ENCODE measurements at regions of chr3 and their contacts with region 1.

Region 1: GRCh38 chr3:120558771-120559241 is 37.3 kb upstream of the NDUFB4 start:
- DNase-seq: peak; percentile 85 to 91 (median 89)
- H3K4me3 ChIP-seq: peak overlapping the region in 1 of 2 donors; percentile 33
- H3K4me3 Mint-ChIP-seq: peak overlapping the region; percentile 74 to 88 (median 82)
- H3K27ac ChIP-seq: peak overlapping the region; percentile 36
- H3K27ac Mint-ChIP-seq: peak overlapping the region; percentile 69 to 96 (median 93)
- H3K4me1 ChIP-seq: peaks cover 11% of the 10 kb centered on the region
- H3K4me1 Mint-ChIP-seq: peaks cover 11 to 24% (median 13%) of the 10 kb centered on the region in 4 donors
- H3K27me3 ChIP-seq: no peaks in the 10 kb centered on the region
- H3K27me3 Mint-ChIP-seq: peaks cover 1% of the 10 kb centered on the region in 2 donors

Region 2: GRCh38 chr3:118927449-118927848 is 1631.4 kb before region 1 on chr3:
- CTCF ChIA-PET with region 1: no interaction called
- POLR2A ChIA-PET with region 1: no interaction called
- intact Hi-C with region 1: no loop called
- DNase-seq: no peak
- H3K4me3 ChIP-seq: no peak overlapping the region
- H3K4me3 Mint-ChIP-seq: no peak overlapping the region
- H3K27ac ChIP-seq: no peak overlapping the region
- H3K27ac Mint-ChIP-seq: no peak overlapping the region
- H3K4me1 ChIP-seq: no peaks in the 10 kb centered on the region
- H3K4me1 Mint-ChIP-seq: peaks cover 0 to 4% (median 0%) of the 10 kb centered on the region in 4 donors
- H3K27me3 ChIP-seq: no peaks in the 10 kb centered on the region
- H3K27me3 Mint-ChIP-seq: peaks cover 2 to 4% of the 10 kb centered on the region in 2 donors

Region 3: GRCh38 chr3:120245386-120245785 is 313.4 kb before region 1 on chr3:
- CTCF ChIA-PET with region 1: interaction called, 116 read pairs
- POLR2A ChIA-PET with region 1: interaction called, 4 read pairs
- intact Hi-C with region 1: loop called (anchors 1 kb)
- DNase-seq: no peak
- H3K4me3 ChIP-seq: no peak overlapping the region
- H3K4me3 Mint-ChIP-seq: no peak overlapping the region
- H3K27ac ChIP-seq: no peak overlapping the region
- H3K27ac Mint-ChIP-seq: no peak overlapping the region
- H3K4me1 ChIP-seq: no peaks in the 10 kb centered on the region
- H3K4me1 Mint-ChIP-seq: no peaks in the 10 kb centered on the region
- H3K27me3 ChIP-seq: peaks cover 4% of the 10 kb centered on the region
- H3K27me3 Mint-ChIP-seq: peaks cover 11 to 17% of the 10 kb centered on the region in 2 donors

Region 4: DNA sequence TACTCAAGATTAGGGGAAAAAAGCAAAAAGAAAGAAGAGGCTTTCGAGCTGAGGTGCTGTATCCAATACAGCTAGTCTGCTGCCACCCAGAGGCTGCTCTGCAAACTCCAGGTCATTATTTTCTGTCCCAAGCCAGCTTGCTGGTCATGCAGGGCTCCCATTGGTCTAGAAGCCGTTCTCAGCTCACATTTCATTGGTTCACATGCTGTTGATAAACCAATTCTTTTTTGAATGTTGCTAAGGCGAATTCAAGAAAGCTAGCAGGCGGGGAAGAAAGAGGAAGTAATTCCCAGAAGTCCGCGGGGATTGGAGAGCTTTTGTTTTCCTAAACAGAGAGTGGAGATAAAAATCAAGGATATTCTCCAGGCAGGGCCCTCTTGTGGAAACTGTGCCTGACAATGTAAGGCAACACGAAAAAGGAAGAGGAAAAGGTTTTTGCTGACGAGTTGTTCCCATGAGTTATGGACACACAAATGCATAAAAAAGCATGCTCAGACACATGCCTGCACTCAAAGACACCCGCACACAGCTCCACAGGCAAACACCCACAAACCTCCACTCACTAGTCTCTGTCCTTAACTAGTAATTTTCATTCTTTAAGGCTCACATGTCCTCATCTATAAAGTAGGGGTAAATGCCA is 141.4 kb before region 1 on chr3:
- CTCF ChIA-PET with region 1: interaction called, 86 read pairs
- POLR2A ChIA-PET with region 1: interaction called, 4 read pairs
- intact Hi-C with region 1: loop called (anchors 1 kb)
- DNase-seq: peak; percentile 78 to 83 (median 80)
- H3K4me3 ChIP-seq: peak overlapping the region; percentile 43 to 59
- H3K4me3 Mint-ChIP-seq: peak overlapping the region; percentile 82 to 94 (median 87)
- H3K27ac ChIP-seq: no peak overlapping the region
- H3K27ac Mint-ChIP-seq: peak overlapping the region in 5 of 7 donors; percentile 23 to 86 (median 81)
- H3K4me1 ChIP-seq: peaks cover 10% of the 10 kb centered on the region
- H3K4me1 Mint-ChIP-seq: peaks cover 11 to 25% (median 12%) of the 10 kb centered on the region in 4 donors
- H3K27me3 ChIP-seq: no peaks in the 10 kb centered on the region
- H3K27me3 Mint-ChIP-seq: peaks cover 0 to 7% of the 10 kb centered on the region in 2 donors

Region 5: DNA sequence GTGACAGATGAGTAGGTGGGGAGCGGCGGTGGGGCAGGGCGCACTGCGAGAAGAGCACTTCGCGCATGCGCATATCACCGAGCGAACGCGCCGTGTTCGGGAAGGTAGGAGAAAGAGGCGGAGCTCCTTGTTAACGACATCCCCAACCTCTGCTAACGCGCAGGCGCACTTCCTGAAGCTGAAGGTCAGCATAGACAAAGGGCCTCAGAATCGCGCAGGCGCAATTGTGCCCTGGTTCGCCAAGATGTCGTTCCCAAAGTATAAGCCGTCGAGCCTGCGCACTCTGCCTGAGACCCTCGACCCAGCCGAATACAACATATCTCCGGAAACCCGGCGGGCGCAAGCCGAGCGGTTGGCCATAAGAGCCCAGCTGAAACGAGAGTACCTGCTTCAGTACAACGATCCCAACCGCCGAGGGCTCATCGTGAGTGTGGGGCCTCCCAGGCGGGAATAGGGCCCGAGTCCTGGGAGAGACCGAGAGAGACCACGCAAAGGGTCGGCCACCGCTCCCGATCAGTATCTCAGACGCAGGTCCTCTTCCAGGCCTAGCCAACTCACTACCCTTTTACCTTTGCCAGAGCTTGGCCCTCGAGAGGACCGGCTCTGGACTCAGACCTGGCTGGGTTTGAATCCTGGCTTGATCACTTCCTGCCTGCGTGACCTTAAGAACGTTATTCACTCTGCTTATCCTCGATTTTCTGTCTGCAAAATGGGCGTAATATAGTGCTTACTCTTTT is 37.5 kb after region 1 on chr3 and contains the start of gene NDUFB4:
- CTCF ChIA-PET with region 1: interaction called, 26 read pairs
- POLR2A ChIA-PET with region 1: interaction called, 8 read pairs
- intact Hi-C with region 1: loop called (anchors 1 kb)
- DNase-seq: peak; percentile 89 to 96 (median 96)
- H3K4me3 ChIP-seq: peak within 1 kb of the TSS; percentile 97 to 99
- H3K4me3 Mint-ChIP-seq: peak within 1 kb of the TSS; percentile 91 to 98 (median 95)
- H3K27ac ChIP-seq: peak within 1 kb of the TSS; percentile 98
- H3K27ac Mint-ChIP-seq: peak within 1 kb of the TSS in 6 of 7 donors; percentile 96 to 99 (median 98)
- H3K4me1 ChIP-seq: peaks cover 30% of the 10 kb centered on the region
- H3K4me1 Mint-ChIP-seq: peaks cover 6 to 8% (median 7%) of the 10 kb centered on the region in 4 donors
- H3K27me3 ChIP-seq: no peaks in the 10 kb centered on the region
- H3K27me3 Mint-ChIP-seq: no peaks in the 10 kb centered on the region
- total RNA-seq, gene NDUFB4: 82.1 to 82.8 TPM

Region 6: GRCh38 chr3:120693439-120694186 is 134.8 kb after region 1 on chr3:
- CTCF ChIA-PET with region 1: no interaction called
- POLR2A ChIA-PET with region 1: no interaction called
- intact Hi-C with region 1: no loop called
- DNase-seq: no peak
- H3K4me3 ChIP-seq: no peak overlapping the region
- H3K4me3 Mint-ChIP-seq: no peak overlapping the region
- H3K27ac ChIP-seq: no peak overlapping the region
- H3K27ac Mint-ChIP-seq: peak overlapping the region in 1 of 7 donors; percentile 70
- H3K4me1 ChIP-seq: no peaks in the 10 kb centered on the region
- H3K4me1 Mint-ChIP-seq: peaks cover 0 to 2% (median 0%) of the 10 kb centered on the region in 4 donors
- H3K27me3 ChIP-seq: no peaks in the 10 kb centered on the region
- H3K27me3 Mint-ChIP-seq: no peaks in the 10 kb centered on the region

Region 7: GRCh38 chr3:120708408-120708807 is 149.6 kb after region 1 on chr3:
- CTCF ChIA-PET with region 1: interaction called, 3 read pairs
- POLR2A ChIA-PET with region 1: no interaction called
- intact Hi-C with region 1: loop called (anchors 10 kb)
- DNase-seq: no peak
- H3K4me3 ChIP-seq: no peak overlapping the region
- H3K4me3 Mint-ChIP-seq: no peak overlapping the region
- H3K27ac ChIP-seq: no peak overlapping the region
- H3K27ac Mint-ChIP-seq: peak overlapping the region in 2 of 7 donors; percentile 8 to 13
- H3K4me1 ChIP-seq: no peaks in the 10 kb centered on the region
- H3K4me1 Mint-ChIP-seq: peaks cover 2 to 10% (median 4%) of the 10 kb centered on the region in 4 donors
- H3K27me3 ChIP-seq: no peaks in the 10 kb centered on the region
- H3K27me3 Mint-ChIP-seq: no peaks in the 10 kb centered on the region

Region 8: DNA sequence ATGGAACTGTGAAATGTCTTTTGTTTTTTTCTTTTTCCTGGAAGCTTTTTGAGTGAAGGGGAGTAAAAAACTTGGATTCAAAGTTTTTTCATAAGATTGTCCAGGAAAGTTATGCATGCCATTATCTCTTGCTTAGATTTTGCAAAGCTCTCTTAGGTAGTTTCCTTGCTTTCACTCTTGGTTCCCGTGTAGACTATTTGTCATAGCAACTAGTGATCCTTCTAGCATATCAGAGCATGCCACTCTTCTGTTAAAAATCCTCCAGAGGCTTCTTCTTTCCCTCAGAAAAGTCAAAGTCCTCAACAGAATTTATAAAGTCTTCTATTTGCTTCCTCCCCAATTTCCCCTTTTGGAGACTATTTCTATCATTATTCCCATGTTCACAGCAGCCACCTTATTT is 204.8 kb after region 1 on chr3:
- CTCF ChIA-PET with region 1: interaction called, 11 read pairs
- POLR2A ChIA-PET with region 1: no interaction called
- intact Hi-C with region 1: no loop called
- DNase-seq: no peak
- H3K4me3 ChIP-seq: no peak overlapping the region
- H3K4me3 Mint-ChIP-seq: no peak overlapping the region
- H3K27ac ChIP-seq: no peak overlapping the region
- H3K27ac Mint-ChIP-seq: peak overlapping the region in 1 of 7 donors; percentile 57
- H3K4me1 ChIP-seq: peaks cover 13% of the 10 kb centered on the region
- H3K4me1 Mint-ChIP-seq: peaks cover 44 to 82% (median 62%) of the 10 kb centered on the region in 4 donors
- H3K27me3 ChIP-seq: no peaks in the 10 kb centered on the region
- H3K27me3 Mint-ChIP-seq: no peaks in the 10 kb centered on the region

Region 9: GRCh38 chr3:120801484-120801883 is 242.7 kb after region 1 on chr3:
- CTCF ChIA-PET with region 1: interaction called, 86 read pairs
- POLR2A ChIA-PET with region 1: no interaction called
- intact Hi-C with region 1: no loop called
- DNase-seq: no peak
- H3K4me3 ChIP-seq: no peak overlapping the region
- H3K4me3 Mint-ChIP-seq: no peak overlapping the region
- H3K27ac ChIP-seq: no peak overlapping the region
- H3K27ac Mint-ChIP-seq: no peak overlapping the region
- H3K4me1 ChIP-seq: no peaks in the 10 kb centered on the region
- H3K4me1 Mint-ChIP-seq: no peaks in the 10 kb centered on the region
- H3K27me3 ChIP-seq: peaks cover 5% of the 10 kb centered on the region
- H3K27me3 Mint-ChIP-seq: peaks cover 2% of the 10 kb centered on the region in 2 donors

Measured in CD4-positive, alpha-beta memory T cell (primary cell).